Ascending aorta (tissue), 2 donors: ENCODE measurements at regions of chr15 and their contacts with region 1.

Region 1: GRCh38 chr15:34795267-34796081 is at the start of gene ACTC1:
- DNase-seq: peak in 1 of 2 donors; percentile 86
- H3K4me3 ChIP-seq: peak within 1 kb of the TSS; percentile 47 to 66
- H3K27ac ChIP-seq: peak within 1 kb of the TSS; percentile 84 to 87
- H3K4me1 ChIP-seq: peaks cover 5 to 31% of the 10 kb centered on the region in 2 donors
- H3K27me3 ChIP-seq: no peaks in the 10 kb centered on the region
- CTCF ChIP-seq: peak in 2 of 3 experiments; percentile 13 to 34
- total RNA-seq, gene ACTC1: 30.2 TPM

Region 2: DNA sequence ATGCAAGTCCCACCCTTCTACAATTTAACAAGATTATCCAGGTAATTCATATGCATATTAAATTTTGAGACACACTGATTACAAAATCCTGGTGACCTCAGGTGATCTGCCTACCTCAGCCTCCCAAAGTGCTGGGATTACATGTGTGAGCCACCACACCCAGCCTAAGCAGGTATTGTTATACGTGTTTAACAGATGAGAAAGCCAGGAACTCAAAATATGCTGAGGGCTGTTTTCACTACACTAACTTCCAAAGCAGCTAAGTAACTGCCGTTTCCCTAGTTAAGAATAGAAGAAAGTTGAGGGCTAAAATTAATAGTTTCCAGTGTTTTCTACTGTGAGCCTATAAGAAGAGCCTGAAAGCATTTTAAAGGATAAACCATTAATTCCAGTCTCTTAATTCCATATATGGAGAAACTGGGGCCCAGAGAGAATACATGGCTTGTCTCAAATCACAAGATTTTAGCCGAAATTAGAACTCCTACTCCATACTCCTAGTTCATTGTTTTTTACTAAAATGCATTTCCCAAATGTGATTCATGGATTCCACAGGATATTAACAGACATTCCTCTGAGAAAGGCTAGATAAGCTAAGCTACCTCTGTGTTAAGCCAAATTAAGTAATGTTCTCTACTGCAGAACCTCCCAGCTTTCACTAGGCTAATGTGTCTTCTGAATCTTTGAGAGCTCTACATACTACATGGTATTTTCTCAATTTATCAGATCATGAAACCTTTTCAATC is 739.5 kb before region 1 on chr15:
- intact Hi-C with region 1: loop called (anchors 10 kb)
- DNase-seq: no peak
- H3K4me3 ChIP-seq: peak overlapping the region in 1 of 2 donors; percentile 4
- H3K27ac ChIP-seq: peak overlapping the region; percentile 72 to 83
- H3K4me1 ChIP-seq: peaks cover 4 to 11% of the 10 kb centered on the region in 2 donors
- H3K27me3 ChIP-seq: no peaks in the 10 kb centered on the region
- CTCF ChIP-seq: no peak

Region 3: DNA sequence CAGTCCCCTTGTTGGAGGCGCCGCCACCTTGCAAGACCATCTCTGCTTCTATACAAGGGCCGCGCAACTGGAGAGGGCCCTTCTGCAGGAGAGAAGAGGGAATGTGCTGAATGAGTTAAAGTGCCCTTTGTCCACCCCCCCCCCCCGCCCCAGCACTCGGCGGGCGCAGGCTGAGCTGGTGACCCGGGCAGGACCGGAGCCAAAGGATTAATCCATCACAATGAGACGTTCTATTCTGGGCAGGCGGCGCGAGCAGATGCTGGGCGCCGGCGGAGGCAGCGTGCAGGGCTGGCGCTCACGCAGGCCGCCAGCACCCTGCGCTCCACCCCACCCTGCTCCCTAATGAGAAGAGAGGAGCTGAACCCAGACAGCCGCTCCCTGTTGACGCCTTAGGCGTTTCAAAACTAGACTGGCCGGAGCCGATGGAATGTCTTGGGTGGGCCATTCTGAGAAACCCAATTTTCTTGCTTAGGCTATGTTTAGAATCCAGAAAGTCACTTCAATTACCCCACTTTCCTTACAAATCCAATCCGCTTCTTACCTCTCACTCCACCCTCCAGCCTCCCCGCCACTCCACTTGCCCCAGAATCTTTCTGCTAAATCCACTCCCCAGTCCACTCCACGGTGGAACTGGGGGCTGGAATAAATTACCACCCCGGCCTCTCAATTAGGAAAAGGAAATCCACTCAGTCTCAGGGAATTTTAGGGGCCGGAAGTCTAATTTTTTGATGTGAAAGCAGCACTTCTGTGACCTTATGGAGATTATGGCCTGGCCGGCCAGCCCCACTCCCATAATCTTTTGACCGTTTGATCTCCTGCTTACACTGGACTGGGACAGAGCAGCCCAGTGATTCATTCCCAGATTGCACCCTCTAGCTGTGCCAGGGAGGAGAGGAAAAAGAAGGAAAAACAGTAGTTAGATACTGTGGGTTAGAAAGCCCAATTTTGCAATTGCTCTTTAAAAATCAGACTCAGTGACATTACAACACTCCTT is 73.4 kb before region 1 on chr15:
- intact Hi-C with region 1: loop called (anchors 1 kb)
- DNase-seq: peak; percentile 61 to 94
- H3K4me3 ChIP-seq: peak overlapping the region; percentile 35 to 41
- H3K27ac ChIP-seq: peak overlapping the region; percentile 86 to 93
- H3K4me1 ChIP-seq: peaks cover 0 to 51% of the 10 kb centered on the region in 2 donors
- H3K27me3 ChIP-seq: no peaks in the 10 kb centered on the region
- CTCF ChIP-seq: peak; percentile 10 to 46 (median 25)

Region 4: DNA sequence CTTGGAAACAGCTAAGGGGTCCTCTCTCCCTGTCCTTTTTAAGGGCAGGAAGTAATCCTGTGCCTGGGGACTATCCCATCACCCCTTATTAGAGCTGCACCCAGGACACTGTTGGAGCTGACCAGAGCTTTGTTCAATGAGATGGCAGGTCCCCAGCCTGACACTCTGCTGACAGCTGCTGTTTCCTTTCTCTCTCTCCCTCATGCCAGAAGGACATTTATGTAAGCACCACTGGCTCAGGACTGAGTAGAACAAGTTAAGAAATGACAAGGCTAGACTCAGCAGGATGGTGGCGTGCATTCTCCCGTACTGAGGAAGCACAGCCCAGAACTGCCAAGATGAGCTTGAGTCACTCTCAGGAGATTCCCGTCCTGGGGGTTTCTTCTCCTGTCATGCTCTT is 58.0 kb before region 1 on chr15:
- intact Hi-C with region 1: no loop called
- DNase-seq: no peak
- H3K4me3 ChIP-seq: no peak overlapping the region
- H3K27ac ChIP-seq: no peak overlapping the region
- H3K4me1 ChIP-seq: no peaks in the 10 kb centered on the region
- H3K27me3 ChIP-seq: no peaks in the 10 kb centered on the region
- CTCF ChIP-seq: no peak

Region 5: DNA sequence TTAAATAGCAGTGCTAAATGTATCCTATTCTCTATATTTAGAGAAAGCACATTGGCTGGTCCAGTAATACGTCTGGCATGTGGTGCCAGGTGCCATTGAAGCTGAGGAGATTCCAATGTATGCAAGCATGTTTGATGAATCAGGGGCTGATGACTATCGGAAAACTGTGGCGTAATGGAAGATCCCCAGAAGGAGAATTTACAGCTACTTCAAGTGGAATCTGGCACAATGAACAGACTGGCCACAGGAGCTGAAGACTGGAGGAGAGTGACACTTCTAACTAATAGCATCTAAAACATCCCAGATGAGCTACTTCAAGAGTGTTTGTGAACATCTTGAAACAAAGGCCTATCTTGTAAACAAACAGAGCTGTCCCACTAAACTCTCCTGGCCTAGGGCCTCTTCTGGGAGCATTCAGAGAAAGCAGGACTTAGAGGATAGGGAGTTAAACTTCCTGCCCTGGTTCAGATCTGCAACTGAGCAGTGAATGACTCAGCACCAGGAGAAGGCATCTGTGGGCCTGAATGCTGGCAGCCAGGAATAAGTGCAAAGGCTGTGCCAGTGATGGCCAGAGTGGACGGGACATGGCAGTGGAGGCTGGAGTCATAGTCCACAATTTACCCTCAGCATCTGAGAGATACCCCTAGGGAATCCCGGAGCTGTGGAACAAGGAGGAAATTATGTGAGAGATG is 15.1 kb after region 1 on chr15:
- intact Hi-C with region 1: loop called (anchors 1 kb)
- DNase-seq: peak; percentile 52 to 92
- H3K4me3 ChIP-seq: no peak overlapping the region
- H3K27ac ChIP-seq: peak overlapping the region; percentile 90 to 92
- H3K4me1 ChIP-seq: peaks cover 0 to 26% of the 10 kb centered on the region in 2 donors
- H3K27me3 ChIP-seq: no peaks in the 10 kb centered on the region
- CTCF ChIP-seq: no peak

Region 6: GRCh38 chr15:34837246-34838016 is 42.0 kb after region 1 on chr15:
- intact Hi-C with region 1: loop called (anchors 1 kb)
- DNase-seq: peak; percentile 44 to 85
- H3K4me3 ChIP-seq: no peak overlapping the region
- H3K27ac ChIP-seq: peak overlapping the region; percentile 36 to 57
- H3K4me1 ChIP-seq: peaks cover 4 to 17% of the 10 kb centered on the region in 2 donors
- H3K27me3 ChIP-seq: no peaks in the 10 kb centered on the region
- CTCF ChIP-seq: no peak

Region 7: GRCh38 chr15:34879107-34879506 is 83.6 kb after region 1 on chr15:
- intact Hi-C with region 1: loop called (anchors 5 kb)
- DNase-seq: no peak
- H3K4me3 ChIP-seq: no peak overlapping the region
- H3K27ac ChIP-seq: no peak overlapping the region
- H3K4me1 ChIP-seq: no peaks in the 10 kb centered on the region
- H3K27me3 ChIP-seq: no peaks in the 10 kb centered on the region
- CTCF ChIP-seq: no peak

Region 8: GRCh38 chr15:34914317-34914716 is 118.8 kb after region 1 on chr15:
- intact Hi-C with region 1: loop called (anchors 1 kb)
- DNase-seq: no peak
- H3K4me3 ChIP-seq: no peak overlapping the region
- H3K27ac ChIP-seq: no peak overlapping the region
- H3K4me1 ChIP-seq: no peaks in the 10 kb centered on the region
- H3K27me3 ChIP-seq: no peaks in the 10 kb centered on the region
- CTCF ChIP-seq: no peak